Activated CD4-positive, alpha-beta T cell treated with anti-CD3 and anti-CD28 coated beads, Interleukin-2, amount 10 ng/mL, durations not matched to agents 24 days and 14 days (primary cell): ENCODE measurements at regions of chr11 and their contacts with region 1.

Region 1: DNA sequence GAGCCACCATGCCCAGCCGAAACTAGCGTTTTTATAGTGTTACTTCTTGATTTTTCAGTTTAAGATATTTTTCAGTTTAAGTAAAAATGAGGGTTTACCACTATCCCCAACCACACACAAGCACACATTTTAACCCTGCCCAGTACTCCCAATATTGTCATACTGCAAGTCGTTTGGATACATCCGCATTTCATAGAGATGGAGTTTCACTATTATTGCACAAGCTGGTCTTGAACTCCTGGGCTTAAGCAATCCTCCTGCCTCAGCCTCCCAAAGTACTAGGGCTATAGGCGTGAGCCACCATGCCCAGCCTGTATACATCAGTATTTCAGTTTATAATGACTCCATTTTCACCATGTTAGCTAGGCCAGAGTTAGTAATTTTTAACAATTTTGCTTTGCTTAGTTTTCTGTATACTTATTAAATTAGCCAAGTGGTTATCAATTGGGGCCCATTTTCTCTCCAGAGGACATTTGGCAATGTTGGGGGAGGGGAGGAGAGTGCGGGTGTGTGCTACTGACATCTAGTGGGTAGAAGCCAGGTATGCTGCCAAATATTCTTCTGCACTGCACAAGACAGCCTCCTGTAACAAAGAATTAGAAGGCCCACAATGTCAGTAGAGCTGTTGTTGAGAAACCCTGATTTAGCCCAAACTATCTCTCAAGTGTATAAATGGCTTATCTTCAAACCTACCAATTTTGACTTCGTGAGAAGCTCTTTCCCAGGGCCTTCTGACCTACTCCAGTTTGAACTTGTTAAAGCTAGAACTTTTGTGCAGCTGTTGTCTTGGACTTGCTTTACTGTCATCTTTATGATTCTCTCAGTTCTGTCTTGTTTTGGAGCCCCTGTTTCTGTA is 7.3 kb downstream of the USP47 start:
- DNase-seq: peak; percentile 88
- H3K4me3 Mint-ChIP-seq: no peak overlapping the region
- H3K27ac Mint-ChIP-seq: peak overlapping the region; percentile 49
- H3K4me1 Mint-ChIP-seq: peaks cover 61% of the 10 kb centered on the region
- H3K27me3 Mint-ChIP-seq: no peaks in the 10 kb centered on the region

Region 2: GRCh38 chr11:10659339-10660216 is 1189.5 kb before region 1 on chr11:
- intact Hi-C with region 1: no loop called
- DNase-seq: no peak
- H3K4me3 Mint-ChIP-seq: no peak overlapping the region
- H3K27ac Mint-ChIP-seq: peak overlapping the region; percentile 64
- H3K4me1 Mint-ChIP-seq: peaks cover 28% of the 10 kb centered on the region
- H3K27me3 Mint-ChIP-seq: no peaks in the 10 kb centered on the region

Region 3: DNA sequence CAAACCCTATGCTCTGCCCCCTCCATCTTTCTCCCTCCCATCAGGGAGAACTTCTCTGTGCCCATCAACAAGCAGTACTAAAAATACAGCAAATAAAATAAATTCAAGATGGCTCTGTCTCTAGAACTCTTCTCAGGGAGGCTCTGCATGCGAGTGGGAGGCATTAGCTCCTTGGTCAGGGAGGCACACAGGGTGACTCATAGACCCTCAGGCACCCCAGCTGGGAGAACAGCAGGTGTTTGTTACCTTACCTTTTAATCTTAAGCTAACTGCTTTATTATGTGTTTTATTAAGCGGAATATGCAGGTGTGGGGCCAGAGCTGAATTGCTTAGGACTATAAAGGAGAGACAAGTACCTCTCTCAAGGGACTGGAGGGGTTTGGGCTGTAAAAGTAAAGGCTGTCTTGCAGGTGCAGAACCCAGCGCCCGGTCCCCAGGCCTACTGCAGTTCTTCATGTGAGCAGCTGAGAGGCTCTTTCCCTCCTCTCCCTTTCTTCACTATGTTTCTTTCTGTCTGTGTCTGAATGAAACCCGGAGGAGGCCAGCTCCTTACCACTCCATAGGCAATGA is 516.9 kb before region 1 on chr11:
- intact Hi-C with region 1: no loop called
- DNase-seq: no peak
- H3K4me3 Mint-ChIP-seq: no peak overlapping the region
- H3K27ac Mint-ChIP-seq: no peak overlapping the region
- H3K4me1 Mint-ChIP-seq: peaks cover 2% of the 10 kb centered on the region
- H3K27me3 Mint-ChIP-seq: no peaks in the 10 kb centered on the region

Region 4: DNA sequence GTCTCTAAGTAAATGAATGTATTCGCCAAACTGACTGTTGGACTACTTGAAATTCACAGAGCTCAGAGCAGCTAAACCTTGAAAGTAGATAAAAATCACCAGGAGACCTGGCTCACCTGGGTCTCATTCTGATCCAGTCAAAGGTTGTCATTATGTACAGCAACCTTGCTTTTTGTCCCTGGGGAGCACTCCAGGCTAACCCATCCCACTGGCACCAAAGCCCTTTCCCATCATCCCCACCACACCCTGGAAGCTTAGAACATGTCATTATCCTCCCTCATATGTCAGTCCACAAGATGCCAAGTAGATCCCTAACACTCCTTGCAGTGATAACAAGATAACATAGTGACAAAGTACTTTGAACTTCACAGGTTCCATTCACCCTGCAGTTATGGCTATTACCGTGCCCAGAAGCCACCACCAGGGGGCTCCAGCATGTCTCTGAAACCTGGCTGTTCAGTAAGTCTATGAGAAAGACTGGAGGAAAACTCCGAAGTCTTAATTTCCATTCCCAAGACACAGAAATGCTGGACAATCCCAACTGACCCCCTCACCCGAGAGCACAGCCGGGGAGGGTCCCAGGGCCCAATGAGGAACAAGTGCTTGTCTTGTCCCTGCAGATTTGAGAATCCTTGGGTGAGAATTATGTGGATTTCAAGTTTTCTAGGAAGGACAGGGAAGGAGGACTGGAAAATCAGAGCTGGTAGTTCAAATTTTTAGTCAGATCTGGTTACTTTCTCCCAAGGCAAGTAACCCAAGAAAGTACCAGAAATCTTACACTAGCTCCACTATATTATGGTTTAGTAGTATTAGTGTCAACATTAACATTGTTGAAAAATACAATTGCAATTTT is 50.3 kb before region 1 on chr11:
- intact Hi-C with region 1: loop called (anchors 1 kb)
- DNase-seq: peak; percentile 88
- H3K4me3 Mint-ChIP-seq: no peak overlapping the region
- H3K27ac Mint-ChIP-seq: no peak overlapping the region
- H3K4me1 Mint-ChIP-seq: no peaks in the 10 kb centered on the region
- H3K27me3 Mint-ChIP-seq: peaks cover 29% of the 10 kb centered on the region

Region 5: GRCh38 chr11:12122083-12122482 is 273.0 kb after region 1 on chr11:
- intact Hi-C with region 1: no loop called
- DNase-seq: no peak
- H3K4me3 Mint-ChIP-seq: no peak overlapping the region
- H3K27ac Mint-ChIP-seq: peak overlapping the region; percentile 34
- H3K4me1 Mint-ChIP-seq: peaks cover 88% of the 10 kb centered on the region
- H3K27me3 Mint-ChIP-seq: no peaks in the 10 kb centered on the region